IMR-90 (cell line): ENCODE measurements at regions of chr2 and their contacts with region 1.

Region 1: DNA sequence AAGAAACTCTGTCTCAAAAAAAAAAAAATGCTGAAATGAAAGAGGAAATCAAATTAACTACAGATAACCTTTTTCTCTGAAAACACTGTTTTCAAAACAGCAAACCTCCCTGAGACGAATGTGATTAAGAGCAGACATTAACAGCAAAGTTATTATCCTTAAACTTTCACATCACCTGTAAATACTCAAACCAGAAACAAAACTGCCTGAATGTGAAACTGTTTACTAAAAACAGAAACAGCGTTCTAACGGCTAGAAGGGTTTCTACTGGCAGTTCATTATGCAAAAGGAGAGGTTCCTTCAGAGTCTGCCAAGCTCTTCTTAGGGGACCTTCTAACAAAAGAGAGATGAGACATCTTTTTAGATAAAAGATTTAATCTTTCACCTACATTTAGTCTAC is 45.9 kb downstream of the PNO1 start:
- DNase-seq: no peak
- ATAC-seq: no peak
- H3K4me3 ChIP-seq: no peak overlapping the region
- H3K27ac ChIP-seq: no peak overlapping the region
- H3K4me1 ChIP-seq: peaks cover 4% of the 10 kb centered on the region
- H3K27me3 ChIP-seq: no peaks in the 10 kb centered on the region
- CTCF ChIP-seq: no peak
- POLR2A ChIP-seq: no peak
- RAD21 ChIP-seq: no peak

Region 2: GRCh38 chr2:67389286-67389685 is 814.3 kb before region 1 on chr2:
- CTCF ChIA-PET with region 1: no interaction called
- POLR2A ChIA-PET with region 1: no interaction called
- dilution Hi-C with region 1: no loop called
- in situ Hi-C with region 1: no loop called
- intact Hi-C with region 1: no loop called
- DNase-seq: peak; percentile 70
- ATAC-seq: peak; percentile 84
- H3K4me3 ChIP-seq: no peak overlapping the region
- H3K27ac ChIP-seq: peak overlapping the region; percentile 96
- H3K4me1 ChIP-seq: peaks cover 18% of the 10 kb centered on the region
- H3K27me3 ChIP-seq: no peaks in the 10 kb centered on the region
- CTCF ChIP-seq: no peak
- POLR2A ChIP-seq: no peak
- RAD21 ChIP-seq: no peak

Region 3: GRCh38 chr2:68238955-68239822 is 35.6 kb after region 1 on chr2:
- CTCF ChIA-PET with region 1: no interaction called
- POLR2A ChIA-PET with region 1: no interaction called
- dilution Hi-C with region 1: no loop called
- in situ Hi-C with region 1: loop called (anchors 10 kb)
- intact Hi-C with region 1: loop called (anchors 5 kb)
- DNase-seq: peak; percentile 49
- ATAC-seq: peak; percentile 64
- H3K4me3 ChIP-seq: no peak overlapping the region
- H3K27ac ChIP-seq: no peak overlapping the region
- H3K4me1 ChIP-seq: peaks cover 25% of the 10 kb centered on the region
- H3K27me3 ChIP-seq: no peaks in the 10 kb centered on the region
- CTCF ChIP-seq: no peak
- POLR2A ChIP-seq: no peak
- RAD21 ChIP-seq: no peak